Activated CD8-positive, alpha-beta memory T cell treated with anti-CD3 and anti-CD28 coated beads, Interleukin-2, amount 10 ng/mL, durations not matched to agents 7 days and 5 days (primary cell): ENCODE measurements at regions of chr1 and their contacts with region 1.

Region 1: GRCh38 chr1:27097484-27097917 is 57.4 kb downstream of the SLC9A1 start:
- DNase-seq: peak; percentile 85
- ATAC-seq: peak; percentile 87
- H3K4me3 Mint-ChIP-seq: no peak overlapping the region
- H3K27ac Mint-ChIP-seq: no peak overlapping the region
- H3K4me1 Mint-ChIP-seq: peaks cover 23% of the 10 kb centered on the region
- H3K27me3 Mint-ChIP-seq: no peaks in the 10 kb centered on the region

Region 2: DNA sequence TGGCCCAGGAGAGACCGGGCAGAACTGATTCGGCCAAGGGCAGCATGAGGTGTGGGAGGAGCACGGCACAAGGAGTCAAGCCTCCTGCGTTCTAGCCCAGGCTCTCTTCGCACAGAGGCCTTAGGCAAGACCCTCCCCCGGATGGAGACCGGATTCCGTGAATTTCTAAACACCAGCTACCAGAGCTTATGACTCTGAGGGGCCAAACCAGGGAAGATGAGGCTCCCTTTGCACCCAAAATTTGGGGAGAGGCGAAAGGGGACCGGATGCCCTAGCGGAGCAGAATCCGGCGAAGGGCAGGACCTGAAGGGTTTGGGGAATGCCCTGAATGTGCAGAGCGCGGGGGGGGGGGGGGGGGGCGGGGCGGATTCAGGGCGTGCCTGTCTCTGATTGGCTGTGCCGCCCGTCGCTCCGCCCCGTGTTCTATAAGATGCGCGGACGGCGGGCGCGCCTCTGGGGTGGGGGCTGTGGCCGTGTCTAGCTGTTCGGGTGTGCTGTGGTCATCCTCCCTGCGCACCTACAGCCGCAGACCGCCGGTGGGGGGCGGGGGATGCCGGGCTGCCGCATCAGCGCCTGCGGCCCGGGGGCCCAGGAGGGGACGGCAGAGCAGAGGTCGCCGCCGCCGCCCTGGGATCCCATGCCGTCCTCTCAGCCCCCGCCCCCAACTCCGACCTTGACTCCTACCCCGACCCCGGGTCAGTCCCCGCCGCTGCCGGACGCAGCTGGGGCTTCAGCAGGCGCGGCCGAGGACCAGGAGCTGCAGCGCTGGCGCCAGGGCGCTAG is 104.1 kb before region 1 on chr1 and contains the start of gene TRNP1:
- CTCF ChIA-PET with region 1: interaction called, 22 read pairs
- DNase-seq: peak; percentile 72
- ATAC-seq: peak; percentile 72
- H3K4me3 Mint-ChIP-seq: peak within 1 kb of the TSS; percentile 61
- H3K27ac Mint-ChIP-seq: no peak within 1 kb of the TSS
- H3K4me1 Mint-ChIP-seq: peaks cover 17% of the 10 kb centered on the region
- H3K27me3 Mint-ChIP-seq: peaks cover 68% of the 10 kb centered on the region
- total RNA-seq, gene TRNP1: 0.15 to 0.19 TPM